Heart right ventricle (tissue), 16 donors: ENCODE measurements at regions of chr19 and their contacts with region 1.

Region 1: GRCh38 chr19:21328885-21329605 is at the start of gene ZNF708:
- DNase-seq: peak; percentile 85 to 93
- ATAC-seq: peak; percentile 100
- H3K4me3 ChIP-seq: peak within 1 kb of the TSS; percentile 63 to 91 (median 82)
- H3K27ac ChIP-seq: peak within 1 kb of the TSS; percentile 90 to 99 (median 97)
- H3K4me1 ChIP-seq: peaks cover 0 to 23% (median 19%) of the 10 kb centered on the region in 9 donors
- H3K27me3 ChIP-seq: no peaks in the 10 kb centered on the region
- CTCF ChIP-seq: no peak
- total RNA-seq, gene ZNF708: 4.1 to 5.7 (median 4.9) TPM

Region 2: DNA sequence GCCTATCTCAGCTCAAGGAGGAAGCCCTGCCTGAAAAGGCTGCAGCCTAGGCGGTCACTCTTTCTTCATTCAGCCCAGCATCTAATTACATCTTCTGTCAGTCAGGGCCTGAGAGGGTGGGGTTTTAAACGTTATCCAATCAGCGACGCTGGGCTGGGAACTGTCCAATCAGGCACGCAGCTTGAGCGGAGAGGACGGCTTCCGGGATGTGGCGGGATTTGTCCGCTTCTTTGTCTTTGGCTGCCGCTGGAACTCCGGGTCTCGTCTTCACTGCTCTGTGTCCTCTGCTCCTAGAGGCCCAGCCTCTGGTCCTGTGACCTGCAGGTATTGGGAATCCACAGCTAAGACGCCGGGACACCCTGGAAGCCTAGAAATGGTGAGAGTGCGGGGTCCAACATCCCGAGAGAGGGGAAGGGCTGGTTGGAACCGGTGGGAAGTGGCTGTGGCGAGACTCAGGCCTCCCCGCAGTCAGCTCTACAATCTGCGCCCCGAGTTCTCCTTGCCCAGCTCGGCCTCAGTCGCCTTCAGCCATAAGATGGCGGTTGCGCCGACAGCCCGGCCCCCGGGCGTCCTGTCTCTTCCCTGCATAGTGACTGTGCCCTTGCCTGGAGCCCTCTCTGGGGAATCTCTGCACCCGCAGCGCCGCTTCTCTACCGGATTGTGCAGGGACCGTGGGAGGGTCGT is 29.9 kb after region 1 on chr19 and contains the start of gene ZNF738:
- intact Hi-C with region 1: loop called in 2 of 10 experiments (anchors 2 kb)
- DNase-seq: peak; percentile 89 to 95
- ATAC-seq: peak; percentile 99 to 100 (median 99)
- H3K4me3 ChIP-seq: peak within 1 kb of the TSS; percentile 44 to 98 (median 72)
- H3K27ac ChIP-seq: peak within 1 kb of the TSS in 9 of 10 donors; percentile 41 to 86 (median 75)
- H3K4me1 ChIP-seq: peaks cover 0 to 11% (median 3%) of the 10 kb centered on the region in 9 donors
- H3K27me3 ChIP-seq: no peaks in the 10 kb centered on the region
- CTCF ChIP-seq: peak in 2 of 9 donors; percentile 5 to 9
- total RNA-seq, gene ZNF738: 0.93 to 4.4 (median 2.3) TPM